ENCODE measurements at regions of chr22 and their contacts with region 1.

Region 1: GRCh38 chr22:32474635-32475467 is at the start of gene FBXO7:
- DNase-seq: peak; percentile 92
- H3K4me3 ChIP-seq: peak within 1 kb of the TSS; percentile 72
- H3K27ac ChIP-seq: peak within 1 kb of the TSS; percentile 97
- H3K4me1 ChIP-seq: peaks cover 6% of the 10 kb centered on the region
- H3K27me3 ChIP-seq: no peaks in the 10 kb centered on the region
- CTCF ChIP-seq: no peak
- total RNA-seq, gene FBXO7: 62.1 to 81.1 TPM

Region 2: GRCh38 chr22:31970490-31971444 is 504.1 kb before region 1 on chr22:
- intact Hi-C with region 1: loop called (anchors 10 kb)
- DNase-seq: peak; percentile 93
- H3K4me3 ChIP-seq: peak overlapping the region; percentile 41
- H3K27ac ChIP-seq: no peak overlapping the region
- H3K4me1 ChIP-seq: no peaks in the 10 kb centered on the region
- H3K27me3 ChIP-seq: no peaks in the 10 kb centered on the region
- CTCF ChIP-seq: peak; percentile 93

Region 3: DNA sequence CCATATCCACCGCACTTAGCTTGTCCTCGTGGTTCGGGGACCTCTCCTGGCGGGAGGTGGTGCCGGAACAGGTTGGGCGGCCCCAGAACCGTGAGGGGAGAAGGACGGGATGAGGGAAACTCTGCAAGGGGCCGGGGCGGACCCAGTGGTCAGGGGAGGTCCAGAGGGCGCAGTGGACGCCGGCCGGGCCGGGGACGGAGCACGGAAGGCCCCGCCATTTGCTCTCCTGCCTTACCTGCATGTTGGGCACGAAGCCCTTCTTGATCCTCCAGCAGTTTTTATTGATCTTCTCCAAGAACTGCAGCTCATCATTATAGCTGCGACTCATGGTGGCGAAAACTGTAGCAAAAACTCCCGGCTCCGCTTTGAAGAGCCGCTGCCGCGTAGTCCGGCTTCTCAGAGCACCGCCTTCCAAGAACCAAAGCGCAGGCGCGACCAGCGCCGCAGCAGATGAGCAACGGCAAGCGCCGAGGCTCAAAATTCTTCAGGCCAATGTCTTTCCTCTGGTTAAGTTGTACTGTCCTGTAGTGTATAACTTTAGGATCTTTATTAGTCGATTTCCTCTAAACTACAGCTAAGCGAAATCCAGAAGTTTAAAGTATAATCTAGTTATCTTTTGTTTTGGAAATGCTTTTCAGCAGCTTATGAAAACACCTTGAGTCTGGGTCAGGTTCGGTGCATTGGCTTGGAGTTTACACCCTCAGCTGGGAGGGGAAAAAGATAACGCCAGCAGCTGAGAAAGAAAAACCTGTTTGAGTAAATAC is 62.8 kb before region 1 on chr22 and contains the start of gene RTCB:
- intact Hi-C with region 1: loop called (anchors 5 kb)
- DNase-seq: peak; percentile 94
- H3K4me3 ChIP-seq: peak within 1 kb of the TSS; percentile 85
- H3K27ac ChIP-seq: peak within 1 kb of the TSS; percentile 54
- H3K4me1 ChIP-seq: peaks cover 11% of the 10 kb centered on the region
- H3K27me3 ChIP-seq: no peaks in the 10 kb centered on the region
- CTCF ChIP-seq: no peak
- total RNA-seq, gene RTCB: 96.6 to 120 TPM

Region 4: GRCh38 chr22:32745251-32745995 is 270.6 kb after region 1 on chr22:
- intact Hi-C with region 1: no loop called
- DNase-seq: peak; percentile 39
- H3K4me3 ChIP-seq: no peak overlapping the region
- H3K27ac ChIP-seq: no peak overlapping the region
- H3K4me1 ChIP-seq: no peaks in the 10 kb centered on the region
- H3K27me3 ChIP-seq: no peaks in the 10 kb centered on the region
- CTCF ChIP-seq: no peak